CD8-positive, alpha-beta T cell (primary cell): ENCODE measurements at regions of chr2 and their contacts with region 1.

Region 1: GRCh38 chr2:161250864-161251436 is 57.3 kb upstream of the PSMD14 start:
- DNase-seq: peak in 2 of 9 experiments; percentile 47 to 58
- ATAC-seq: peak; percentile 65
- H3K4me3 ChIP-seq: no peak overlapping the region
- H3K4me3 Mint-ChIP-seq: no peak overlapping the region
- H3K27ac ChIP-seq: no peak overlapping the region
- H3K27ac Mint-ChIP-seq: no peak overlapping the region
- H3K4me1 ChIP-seq: peaks cover 3% of the 10 kb centered on the region
- H3K4me1 Mint-ChIP-seq: peaks cover 22% of the 10 kb centered on the region
- H3K27me3 ChIP-seq: no peaks in the 10 kb centered on the region
- H3K27me3 Mint-ChIP-seq: peaks cover 2% of the 10 kb centered on the region
- CTCF ChIP-seq: peak; percentile 37

Region 2: GRCh38 chr2:161238560-161239325 is 12.2 kb before region 1 on chr2:
- CTCF ChIA-PET with region 1: interaction called, 10 read pairs
- POLR2A ChIA-PET with region 1: interaction called, 4 read pairs
- intact Hi-C with region 1: no loop called
- DNase-seq: peak; percentile 18 to 74 (median 68)
- ATAC-seq: peak; percentile 71
- H3K4me3 ChIP-seq: peak overlapping the region; percentile 56 to 64
- H3K4me3 Mint-ChIP-seq: peak overlapping the region; percentile 92
- H3K27ac ChIP-seq: no peak overlapping the region
- H3K27ac Mint-ChIP-seq: peak overlapping the region; percentile 78
- H3K4me1 ChIP-seq: peaks cover 16% of the 10 kb centered on the region
- H3K4me1 Mint-ChIP-seq: peaks cover 49% of the 10 kb centered on the region
- H3K27me3 ChIP-seq: peaks cover 0 to 4% of the 10 kb centered on the region in 2 experiments
- H3K27me3 Mint-ChIP-seq: peaks cover 2% of the 10 kb centered on the region
- CTCF ChIP-seq: no peak